B cell (primary cell): ENCODE measurements at regions of chr11 and their contacts with region 1.

Region 1: DNA sequence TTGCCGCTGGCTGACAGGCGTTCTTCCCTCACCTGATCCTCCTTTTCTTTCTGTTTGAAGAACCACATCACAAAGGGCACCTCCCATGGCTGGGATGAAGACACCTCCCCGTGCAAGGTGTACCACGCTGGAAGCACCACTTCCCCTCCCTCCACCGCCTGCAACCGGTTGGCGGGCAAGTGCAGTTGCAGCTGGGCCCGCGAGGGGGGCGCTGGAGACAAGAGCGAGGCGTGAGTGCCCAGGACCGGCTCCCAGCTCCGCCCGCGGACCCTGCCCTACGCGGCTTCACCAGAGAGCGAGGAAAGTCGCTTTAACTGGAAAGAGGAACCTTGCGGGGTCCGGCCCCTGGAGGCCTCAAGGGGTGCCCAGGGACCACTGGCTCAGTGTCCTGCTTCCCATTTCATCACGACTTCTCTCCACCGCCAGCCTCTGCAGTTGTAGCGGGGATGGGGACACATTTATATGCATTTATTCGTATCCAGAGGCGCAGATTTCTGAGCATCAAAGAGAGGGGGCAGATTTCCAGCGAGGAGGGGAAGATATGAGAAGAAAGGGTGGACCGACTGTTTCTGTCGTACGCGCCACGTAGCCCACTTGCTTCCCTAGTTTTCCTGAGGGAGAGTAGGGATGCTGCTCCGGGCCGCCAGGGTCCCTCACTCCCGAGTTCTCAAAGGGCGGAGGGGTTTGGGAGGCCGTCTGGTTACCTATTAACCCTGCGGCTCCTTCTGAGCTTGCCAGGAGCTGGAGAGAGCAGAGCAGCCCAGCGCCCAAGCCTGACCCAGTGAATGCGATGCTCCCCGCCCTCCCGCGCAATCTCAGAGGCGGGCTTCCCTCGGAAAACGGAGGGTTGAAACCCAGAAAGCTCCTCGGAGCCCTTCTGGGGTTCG is 3.5 kb downstream of the ESAM start:
- DNase-seq: peak; percentile 83
- ATAC-seq: peak; percentile 67
- H3K4me3 ChIP-seq: peak overlapping the region in 4 of 5 experiments; percentile 27 to 81 (median 43)
- H3K4me3 Mint-ChIP-seq: peak overlapping the region; percentile 81
- H3K27ac ChIP-seq: peak overlapping the region in 1 of 2 donors; percentile 22
- H3K27ac Mint-ChIP-seq: no peak overlapping the region
- H3K4me1 ChIP-seq: peaks cover 38 to 53% of the 10 kb centered on the region in 2 donors
- H3K4me1 Mint-ChIP-seq: peaks cover 39% of the 10 kb centered on the region
- H3K27me3 ChIP-seq: peaks cover 0 to 22% (median 10%) of the 10 kb centered on the region in 4 experiments
- H3K27me3 Mint-ChIP-seq: peaks cover 11% of the 10 kb centered on the region
- CTCF ChIP-seq: peak; percentile 84

Region 2: DNA sequence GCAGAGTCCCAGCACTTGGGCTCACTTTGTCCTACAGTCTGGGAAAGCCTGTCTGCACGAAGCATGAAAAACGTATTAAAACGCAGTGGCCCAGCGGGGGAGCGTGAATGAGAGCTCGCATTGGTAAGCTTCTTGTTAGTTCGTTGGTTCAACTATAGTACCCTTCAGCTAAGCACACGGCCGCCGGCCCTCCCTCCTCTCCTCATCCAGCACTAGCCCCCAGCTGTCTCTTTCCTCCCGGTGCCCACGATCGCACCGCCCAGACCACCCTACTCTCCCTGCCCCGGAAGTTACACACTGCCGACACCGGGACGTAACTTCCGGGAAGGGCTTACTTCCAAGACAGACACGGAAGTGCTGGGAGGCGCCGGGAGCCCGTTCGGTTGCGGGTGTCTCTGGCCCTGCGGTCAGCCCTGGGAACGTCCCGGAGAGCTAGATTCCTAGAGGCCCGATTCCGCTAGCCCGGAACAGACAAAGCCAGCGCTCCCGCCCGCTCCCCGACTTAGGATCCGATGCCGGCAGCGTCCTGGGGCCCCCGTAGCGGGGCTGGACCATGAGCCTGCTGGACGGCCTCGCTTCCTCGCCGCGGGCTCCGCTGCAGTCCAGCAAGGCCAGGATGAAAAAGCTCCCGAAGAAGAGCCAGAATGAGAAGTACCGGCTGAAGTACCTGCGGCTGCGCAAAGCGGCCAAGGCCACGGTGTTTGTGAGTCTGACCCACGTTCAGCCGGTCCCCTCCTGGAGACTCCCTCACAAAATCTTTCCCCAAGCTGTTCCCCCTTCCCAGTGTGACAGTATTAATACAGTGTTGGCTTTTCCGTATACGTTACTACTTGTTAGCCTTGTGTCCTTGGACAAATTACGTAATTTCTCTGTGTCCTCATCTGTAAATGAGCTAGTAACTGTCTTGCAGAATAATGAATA is 135.8 kb before region 1 on chr11 and contains the start of gene TBRG1:
- CTCF ChIA-PET with region 1: no interaction called
- POLR2A ChIA-PET with region 1: no interaction called
- intact Hi-C with region 1: loop called (anchors 2 kb)
- DNase-seq: peak; percentile 89
- ATAC-seq: peak; percentile 97
- H3K4me3 ChIP-seq: peak within 1 kb of the TSS; percentile 75 to 98 (median 91)
- H3K4me3 Mint-ChIP-seq: peak within 1 kb of the TSS; percentile 99
- H3K27ac ChIP-seq: peak within 1 kb of the TSS; percentile 71 to 95
- H3K27ac Mint-ChIP-seq: peak within 1 kb of the TSS; percentile 97
- H3K4me1 ChIP-seq: peaks cover 15 to 17% of the 10 kb centered on the region in 2 donors
- H3K4me1 Mint-ChIP-seq: peaks cover 31% of the 10 kb centered on the region
- H3K27me3 ChIP-seq: peaks cover 0 to 13% (median 3%) of the 10 kb centered on the region in 4 experiments
- H3K27me3 Mint-ChIP-seq: peaks cover 24% of the 10 kb centered on the region
- CTCF ChIP-seq: no peak
- total RNA-seq, gene TBRG1: 66.8 and 71.5 TPM in 2 replicates

Region 3: GRCh38 chr11:124739479-124740276 is 18.9 kb before region 1 on chr11 and contains the start of gene NRGN:
- CTCF ChIA-PET with region 1: interaction called, 18 read pairs
- POLR2A ChIA-PET with region 1: interaction called, 3 read pairs
- intact Hi-C with region 1: loop called (anchors 1 kb)
- DNase-seq: peak; percentile 84
- ATAC-seq: peak; percentile 96
- H3K4me3 ChIP-seq: peak within 1 kb of the TSS; percentile 44 to 68 (median 62)
- H3K4me3 Mint-ChIP-seq: peak within 1 kb of the TSS; percentile 92
- H3K27ac ChIP-seq: no peak within 1 kb of the TSS
- H3K27ac Mint-ChIP-seq: peak within 1 kb of the TSS; percentile 60
- H3K4me1 ChIP-seq: peaks cover 8 to 17% of the 10 kb centered on the region in 2 donors
- H3K4me1 Mint-ChIP-seq: peaks cover 16% of the 10 kb centered on the region
- H3K27me3 ChIP-seq: peaks cover 0 to 13% (median 2%) of the 10 kb centered on the region in 4 experiments
- H3K27me3 Mint-ChIP-seq: no peaks in the 10 kb centered on the region
- CTCF ChIP-seq: no peak
- total RNA-seq, gene NRGN: 0.66 TPM in 1 of 2 replicates, not detected in the other

Region 4: GRCh38 chr11:124778281-124778680 is 19.7 kb after region 1 on chr11:
- CTCF ChIA-PET with region 1: interaction called, 12 read pairs
- POLR2A ChIA-PET with region 1: interaction called, 3 read pairs
- intact Hi-C with region 1: no loop called
- DNase-seq: no peak
- ATAC-seq: no peak
- H3K4me3 ChIP-seq: no peak overlapping the region
- H3K4me3 Mint-ChIP-seq: no peak overlapping the region
- H3K27ac ChIP-seq: no peak overlapping the region
- H3K27ac Mint-ChIP-seq: no peak overlapping the region
- H3K4me1 ChIP-seq: no peaks in the 10 kb centered on the region
- H3K4me1 Mint-ChIP-seq: peaks cover 15% of the 10 kb centered on the region
- H3K27me3 ChIP-seq: no peaks in the 10 kb centered on the region
- H3K27me3 Mint-ChIP-seq: no peaks in the 10 kb centered on the region
- CTCF ChIP-seq: no peak

Region 5: GRCh38 chr11:124837491-124837856 is 78.9 kb after region 1 on chr11:
- CTCF ChIA-PET with region 1: interaction called, 20 read pairs
- POLR2A ChIA-PET with region 1: no interaction called
- intact Hi-C with region 1: loop called (anchors 1 kb)
- DNase-seq: peak; percentile 43
- ATAC-seq: no peak
- H3K4me3 ChIP-seq: no peak overlapping the region
- H3K4me3 Mint-ChIP-seq: no peak overlapping the region
- H3K27ac ChIP-seq: no peak overlapping the region
- H3K27ac Mint-ChIP-seq: no peak overlapping the region
- H3K4me1 ChIP-seq: peaks cover 24 to 30% of the 10 kb centered on the region in 2 donors
- H3K4me1 Mint-ChIP-seq: peaks cover 18% of the 10 kb centered on the region
- H3K27me3 ChIP-seq: peaks cover 0 to 53% (median 42%) of the 10 kb centered on the region in 4 experiments
- H3K27me3 Mint-ChIP-seq: peaks cover 62% of the 10 kb centered on the region
- CTCF ChIP-seq: no peak

Region 6: DNA sequence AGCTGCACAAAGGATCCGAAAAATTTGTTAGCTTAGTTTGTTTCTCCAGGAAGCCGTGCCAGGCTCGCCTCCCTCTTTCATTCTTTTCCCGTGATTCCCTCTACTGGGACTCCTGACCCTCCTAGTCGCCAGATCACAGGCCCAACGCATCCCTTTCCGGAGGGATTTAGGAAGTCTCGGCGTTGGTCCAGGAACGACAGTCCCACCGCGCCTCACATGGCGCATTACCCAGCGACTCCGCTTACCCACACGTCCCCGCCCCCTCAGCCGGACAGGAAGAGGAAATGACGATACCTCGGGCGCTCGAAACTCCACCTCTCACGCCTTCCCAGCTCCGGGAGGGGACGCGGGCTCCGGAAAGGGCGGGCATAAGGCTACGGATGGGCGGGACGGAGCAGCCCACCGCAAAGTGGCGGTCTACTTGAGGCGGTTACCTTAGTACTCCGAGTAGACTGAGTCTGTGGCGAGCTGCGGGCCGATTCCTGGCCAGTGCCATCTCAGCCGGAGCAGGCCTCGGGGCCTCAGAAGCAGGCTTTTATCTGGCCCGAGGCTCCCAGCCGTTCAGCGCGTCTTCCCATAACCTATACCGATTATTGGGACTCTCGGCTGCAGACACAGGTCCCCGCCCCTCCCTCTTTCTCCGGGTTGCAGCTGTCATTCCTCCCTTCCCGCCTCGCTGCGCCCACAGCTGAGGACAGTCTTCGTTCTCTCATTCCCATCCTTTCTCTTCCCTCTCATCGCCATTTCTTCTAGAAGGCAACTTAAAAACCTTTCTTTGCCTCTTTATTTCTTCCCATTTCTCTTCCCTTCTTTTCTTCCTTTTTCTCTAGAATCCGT is 195.4 kb after region 1 on chr11 and contains the start of gene CCDC15:
- CTCF ChIA-PET with region 1: no interaction called
- POLR2A ChIA-PET with region 1: no interaction called
- intact Hi-C with region 1: no loop called
- DNase-seq: peak; percentile 95
- ATAC-seq: peak; percentile 99
- H3K4me3 ChIP-seq: peak within 1 kb of the TSS; percentile 62 to 85 (median 81)
- H3K4me3 Mint-ChIP-seq: no peak within 1 kb of the TSS
- H3K27ac ChIP-seq: peak within 1 kb of the TSS; percentile 45 to 78
- H3K27ac Mint-ChIP-seq: no peak within 1 kb of the TSS
- H3K4me1 ChIP-seq: peaks cover 11 to 15% of the 10 kb centered on the region in 2 donors
- H3K4me1 Mint-ChIP-seq: no peaks in the 10 kb centered on the region
- H3K27me3 ChIP-seq: peaks cover 0 to 2% (median 0%) of the 10 kb centered on the region in 4 experiments
- H3K27me3 Mint-ChIP-seq: no peaks in the 10 kb centered on the region
- CTCF ChIP-seq: no peak
- total RNA-seq, gene CCDC15: 1.8 TPM in 2 replicates